Common myeloid progenitor, CD34-positive (primary cell): ENCODE measurements at regions of chr17 and their contacts with region 1.

Region 1: DNA sequence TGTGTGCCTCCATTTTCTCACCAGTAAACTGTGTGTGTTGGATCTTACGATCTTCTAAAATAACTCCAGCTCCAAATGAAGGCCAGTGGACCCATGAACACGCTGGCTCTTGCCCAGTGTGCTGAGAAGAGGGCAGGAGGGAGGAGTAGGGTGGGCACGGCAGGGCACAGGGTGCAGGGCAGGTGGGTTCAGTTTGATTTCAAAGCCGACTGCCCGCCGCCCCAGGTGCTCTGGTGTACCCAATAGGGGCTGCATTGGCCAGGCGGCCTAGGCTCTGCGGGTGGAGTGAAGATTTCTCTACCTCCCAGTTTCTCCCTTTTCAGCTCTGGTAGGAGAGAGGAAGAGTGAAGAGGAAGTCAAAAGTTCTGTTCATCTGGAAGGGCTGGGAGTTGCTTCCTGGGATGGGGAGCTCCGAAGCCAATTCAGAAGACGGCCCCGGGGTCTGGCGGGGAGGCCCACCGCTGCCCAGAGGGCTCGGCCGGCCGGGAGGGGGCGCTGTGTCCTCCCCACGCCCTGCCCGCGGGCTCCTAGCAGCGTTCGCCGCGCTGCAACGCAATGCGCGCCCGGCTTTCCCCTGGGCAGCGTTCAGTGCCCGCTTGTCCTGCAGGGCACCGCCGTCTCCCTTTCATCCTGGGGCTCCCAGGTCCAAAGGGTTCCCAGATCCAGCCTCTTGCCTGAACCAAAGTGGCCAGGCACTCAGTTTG is 1.1 kb upstream of the CRHR1 start:
- DNase-seq: peak; percentile 38 to 58 (median 56)
- H3K4me3 ChIP-seq: peak overlapping the region in 5 of 7 experiments; percentile 34 to 71 (median 57)
- H3K27ac ChIP-seq: no peak overlapping the region
- H3K4me1 ChIP-seq: peaks cover 0 to 24% (median 19%) of the 10 kb centered on the region in 4 experiments
- H3K27me3 ChIP-seq: peaks cover 7 to 91% (median 42%) of the 10 kb centered on the region in 5 experiments

Region 2: DNA sequence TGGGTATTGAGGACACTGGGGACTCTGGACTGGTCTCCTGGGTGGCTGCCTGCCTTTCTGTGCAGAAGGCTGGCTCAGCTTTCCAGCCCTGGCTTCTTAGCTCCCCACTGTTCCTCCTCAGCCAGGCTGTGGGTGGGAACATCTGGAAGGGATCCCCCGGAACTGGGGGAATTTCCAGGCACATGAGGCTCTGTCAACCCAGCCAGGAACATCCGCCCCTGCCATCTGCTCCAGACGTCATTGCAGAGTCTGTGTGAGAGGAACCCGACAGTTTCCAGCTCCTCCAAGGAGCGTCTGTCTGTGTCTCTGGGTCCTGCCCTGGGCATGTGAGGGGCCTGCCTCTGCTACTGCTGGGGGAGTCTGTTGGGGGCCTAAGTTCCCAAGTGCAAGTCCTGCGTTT is 35.1 kb before region 1 on chr17:
- CTCF ChIA-PET with region 1: no interaction called
- POLR2A ChIA-PET with region 1: no interaction called
- DNase-seq: no peak
- H3K4me3 ChIP-seq: no peak overlapping the region
- H3K27ac ChIP-seq: no peak overlapping the region
- H3K4me1 ChIP-seq: no peaks in the 10 kb centered on the region
- H3K27me3 ChIP-seq: peaks cover 0 to 49% (median 4%) of the 10 kb centered on the region in 5 experiments

Region 3: DNA sequence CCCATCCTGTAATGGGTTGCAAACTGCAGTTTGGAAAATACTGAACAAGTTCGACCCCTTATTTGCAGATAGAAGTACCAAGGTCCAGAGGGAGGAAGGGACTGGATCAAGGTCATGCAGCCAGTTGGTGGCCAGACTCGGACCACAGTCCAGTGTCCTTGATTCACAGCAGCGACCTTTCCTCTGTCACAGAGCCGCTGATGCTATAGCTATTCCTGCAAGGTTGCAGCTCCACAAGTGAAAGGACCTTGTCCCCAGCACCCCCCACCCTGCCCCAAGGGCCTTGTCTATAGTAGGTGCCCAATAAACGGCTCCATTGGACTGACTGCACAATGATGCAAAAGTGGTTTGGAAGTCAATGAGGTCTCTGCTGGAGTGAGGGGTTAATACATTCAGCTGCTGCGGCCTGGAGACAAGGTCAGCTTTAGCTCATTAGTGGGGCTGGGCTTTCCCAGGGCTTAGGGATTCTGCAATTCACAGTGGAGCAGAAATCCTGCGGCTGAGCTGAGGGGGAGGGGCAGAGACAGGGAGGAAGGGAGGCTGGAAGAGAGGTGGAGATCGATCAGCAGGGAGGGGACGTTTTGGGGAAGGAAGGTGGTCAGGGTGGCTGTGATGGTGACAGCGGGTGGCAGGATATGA is 12.3 kb before region 1 on chr17:
- CTCF ChIA-PET with region 1: interaction called, 11 read pairs
- POLR2A ChIA-PET with region 1: no interaction called
- DNase-seq: no peak
- H3K4me3 ChIP-seq: no peak overlapping the region
- H3K27ac ChIP-seq: no peak overlapping the region
- H3K4me1 ChIP-seq: no peaks in the 10 kb centered on the region
- H3K27me3 ChIP-seq: peaks cover 5 to 67% (median 19%) of the 10 kb centered on the region in 5 experiments

Region 4: DNA sequence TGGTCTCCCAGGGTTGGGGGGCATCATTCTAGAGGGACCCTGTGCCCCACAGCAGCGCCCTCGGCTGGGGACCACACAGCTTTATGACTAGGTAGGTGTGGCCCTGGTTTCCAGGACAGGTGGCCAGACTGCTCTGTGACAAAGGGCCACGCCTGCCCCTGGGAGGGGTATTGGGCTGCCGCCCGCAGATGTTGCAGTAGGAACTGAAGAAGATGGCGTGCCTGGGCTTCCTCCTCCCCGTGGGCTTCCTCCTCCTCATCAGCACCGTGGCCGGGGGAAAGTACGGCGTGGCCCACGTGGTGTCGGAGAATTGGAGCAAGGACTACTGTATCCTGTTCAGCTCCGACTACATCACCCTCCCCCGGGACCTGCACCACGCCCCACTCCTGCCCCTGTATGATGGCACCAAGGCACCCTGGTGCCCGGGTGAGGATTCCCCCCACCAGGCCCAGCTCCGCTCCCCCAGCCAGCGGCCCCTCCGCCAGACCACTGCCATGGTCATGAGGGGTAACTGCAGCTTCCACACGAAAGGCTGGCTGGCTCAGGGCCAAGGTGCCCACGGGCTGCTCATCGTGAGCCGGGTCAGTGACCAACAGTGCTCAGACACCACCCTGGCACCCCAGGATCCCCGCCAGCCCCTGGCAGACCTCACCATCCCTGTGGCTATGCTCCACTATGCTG is 61.8 kb after region 1 on chr17 and contains the start of gene SPPL2C:
- CTCF ChIA-PET with region 1: no interaction called
- POLR2A ChIA-PET with region 1: no interaction called
- DNase-seq: no peak
- H3K4me3 ChIP-seq: no peak within 1 kb of the TSS
- H3K27ac ChIP-seq: no peak within 1 kb of the TSS
- H3K4me1 ChIP-seq: peaks cover 0 to 3% (median 0%) of the 10 kb centered on the region in 4 experiments
- H3K27me3 ChIP-seq: peaks cover 0 to under 1% (median 0%) of the 10 kb centered on the region in 5 experiments